Activated CD8-positive, alpha-beta T cell treated with anti-CD3 and anti-CD28 coated beads for 36 hours (primary cell): ENCODE measurements at regions of chr13 and their contacts with region 1.

Region 1: GRCh38 chr13:95191821-95192563 is 109.3 kb downstream of the ABCC4 start:
- DNase-seq: peak; percentile 80
- ATAC-seq: peak; percentile 88
- H3K4me3 Mint-ChIP-seq: no peak overlapping the region
- H3K27ac Mint-ChIP-seq: no peak overlapping the region
- H3K4me1 Mint-ChIP-seq: peaks cover 6% of the 10 kb centered on the region
- H3K27me3 Mint-ChIP-seq: no peaks in the 10 kb centered on the region
- CTCF ChIP-seq: peak; percentile 77

Region 2: GRCh38 chr13:95128045-95128643 is 63.8 kb before region 1 on chr13:
- CTCF ChIA-PET with region 1: no interaction called
- POLR2A ChIA-PET with region 1: no interaction called
- intact Hi-C with region 1: no loop called
- DNase-seq: no peak
- ATAC-seq: no peak
- H3K4me3 Mint-ChIP-seq: no peak overlapping the region
- H3K27ac Mint-ChIP-seq: no peak overlapping the region
- H3K4me1 Mint-ChIP-seq: no peaks in the 10 kb centered on the region
- H3K27me3 Mint-ChIP-seq: no peaks in the 10 kb centered on the region
- CTCF ChIP-seq: no peak

Region 3: GRCh38 chr13:95181586-95181985 is 10.4 kb before region 1 on chr13:
- CTCF ChIA-PET with region 1: interaction called, 21 read pairs
- POLR2A ChIA-PET with region 1: no interaction called
- intact Hi-C with region 1: no loop called
- DNase-seq: no peak
- ATAC-seq: no peak
- H3K4me3 Mint-ChIP-seq: no peak overlapping the region
- H3K27ac Mint-ChIP-seq: no peak overlapping the region
- H3K4me1 Mint-ChIP-seq: peaks cover 62% of the 10 kb centered on the region
- H3K27me3 Mint-ChIP-seq: no peaks in the 10 kb centered on the region
- CTCF ChIP-seq: no peak

Region 4: GRCh38 chr13:95301183-95301967 is 109.4 kb after region 1 on chr13 and contains the start of gene ABCC4:
- CTCF ChIA-PET with region 1: interaction called, 23 read pairs
- POLR2A ChIA-PET with region 1: interaction called, 3 read pairs
- intact Hi-C with region 1: no loop called
- DNase-seq: peak; percentile 52
- ATAC-seq: peak; percentile 81
- H3K4me3 Mint-ChIP-seq: peak within 1 kb of the TSS; percentile 80
- H3K27ac Mint-ChIP-seq: peak within 1 kb of the TSS; percentile 69
- H3K4me1 Mint-ChIP-seq: peaks cover 35% of the 10 kb centered on the region
- H3K27me3 Mint-ChIP-seq: no peaks in the 10 kb centered on the region
- CTCF ChIP-seq: no peak
- total RNA-seq, gene ABCC4: 9.6 to 11.8 TPM

Region 5: DNA sequence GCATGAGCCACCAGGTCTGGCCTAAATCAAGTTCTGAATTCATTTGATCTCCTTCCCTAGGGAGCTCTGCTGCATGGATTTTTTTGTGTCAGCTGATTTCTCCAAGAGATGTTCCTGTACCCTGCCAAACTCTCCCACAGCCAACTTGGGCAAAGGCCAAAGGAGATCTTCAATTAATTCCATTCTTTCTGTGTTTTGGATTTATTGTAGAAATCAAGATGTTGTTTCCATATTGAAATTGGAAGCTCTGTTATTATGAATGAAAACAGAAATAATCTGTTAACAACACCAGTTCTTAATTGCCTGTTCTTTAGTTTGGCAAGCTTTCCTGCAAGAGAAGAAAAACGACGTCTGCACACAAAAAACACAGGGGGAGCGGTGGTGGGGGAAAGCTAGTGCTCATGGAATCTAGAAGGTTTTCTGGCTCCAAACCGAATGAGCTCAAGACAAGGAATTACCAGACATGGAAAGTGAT is 195.8 kb after region 1 on chr13:
- CTCF ChIA-PET with region 1: interaction called, 121 read pairs
- POLR2A ChIA-PET with region 1: interaction called, 6 read pairs
- intact Hi-C with region 1: no loop called
- DNase-seq: no peak
- ATAC-seq: no peak
- H3K4me3 Mint-ChIP-seq: no peak overlapping the region
- H3K27ac Mint-ChIP-seq: no peak overlapping the region
- H3K4me1 Mint-ChIP-seq: no peaks in the 10 kb centered on the region
- H3K27me3 Mint-ChIP-seq: peaks cover 12% of the 10 kb centered on the region
- CTCF ChIP-seq: no peak

Region 6: DNA sequence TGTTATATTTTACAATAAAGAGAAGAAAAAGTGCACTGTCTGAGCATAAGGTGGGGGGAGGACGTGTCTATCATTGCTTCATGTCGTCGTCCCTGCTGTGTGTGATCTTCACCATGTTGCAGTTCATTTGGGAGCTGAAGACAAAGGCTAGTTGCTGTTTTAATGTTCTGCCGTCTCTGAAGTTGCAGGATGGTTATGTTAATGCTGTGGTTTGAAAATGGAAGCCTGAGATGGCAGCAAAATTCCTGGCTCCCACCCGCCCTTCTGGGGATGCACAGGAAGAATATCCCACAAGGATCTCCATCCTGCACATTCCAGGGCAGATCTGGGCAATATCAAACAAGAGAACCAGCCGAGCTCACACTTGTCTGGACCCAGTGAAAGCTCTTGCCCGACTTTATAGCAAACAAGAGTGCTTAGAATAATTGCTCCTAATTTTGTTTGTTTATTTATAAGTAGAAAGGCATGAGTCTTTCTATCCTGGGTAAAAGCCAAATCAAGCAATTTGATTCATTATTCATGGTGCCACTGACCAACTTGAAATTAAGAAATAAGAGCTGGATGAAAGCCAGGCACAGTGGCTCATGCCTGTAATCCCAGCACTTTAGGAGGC is 219.5 kb after region 1 on chr13:
- CTCF ChIA-PET with region 1: interaction called, 309 read pairs
- POLR2A ChIA-PET with region 1: no interaction called
- intact Hi-C with region 1: no loop called
- DNase-seq: no peak
- ATAC-seq: no peak
- H3K4me3 Mint-ChIP-seq: no peak overlapping the region
- H3K27ac Mint-ChIP-seq: no peak overlapping the region
- H3K4me1 Mint-ChIP-seq: no peaks in the 10 kb centered on the region
- H3K27me3 Mint-ChIP-seq: peaks cover 3% of the 10 kb centered on the region
- CTCF ChIP-seq: no peak